HEK293 (cell line): ENCODE measurements at regions of chr20 and their contacts with region 1.

Region 1: DNA sequence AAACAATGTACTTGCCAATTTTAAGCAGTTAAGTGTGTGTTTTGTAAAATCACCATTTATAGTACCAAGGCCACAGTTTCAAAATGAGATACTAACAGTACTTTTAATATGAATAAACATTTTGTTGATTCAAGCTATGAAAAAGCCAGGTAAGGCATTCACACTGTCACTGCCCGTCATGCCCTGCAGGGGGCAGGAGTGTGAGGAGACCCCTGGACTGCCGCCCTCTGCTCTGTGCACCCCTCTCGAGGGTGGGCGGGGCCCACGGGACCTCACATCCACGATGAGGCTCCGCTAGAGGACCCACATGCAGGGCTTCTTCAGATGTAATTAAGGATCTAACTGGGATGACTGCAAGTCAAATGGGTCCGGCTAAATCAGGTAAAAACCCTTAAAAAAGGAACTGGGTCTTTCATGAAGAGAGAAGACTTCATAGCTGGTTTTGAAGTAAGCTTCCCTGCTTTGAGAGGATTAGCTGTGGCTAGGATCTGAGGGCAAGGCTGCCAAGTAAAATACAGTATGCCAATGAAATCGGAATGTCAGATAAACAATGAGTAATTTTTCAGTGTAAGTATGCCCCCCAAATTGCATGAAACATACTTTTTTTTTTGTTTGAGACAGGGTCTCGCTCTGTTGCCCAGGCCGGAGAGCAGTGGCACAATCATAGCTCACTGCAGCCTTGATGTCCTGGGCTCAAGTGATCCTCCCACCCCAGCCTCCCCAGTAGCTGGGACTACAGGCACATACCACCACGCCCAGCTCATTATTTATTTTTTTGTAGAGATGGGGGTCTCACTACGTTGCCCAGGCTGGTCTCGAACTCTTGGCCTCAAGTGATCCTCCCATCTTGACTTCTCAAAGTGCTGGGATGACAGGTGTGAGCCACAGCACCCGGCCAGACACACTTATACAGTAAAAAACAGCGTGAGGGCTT is 18.7 kb downstream of the DIDO1 start:
- H3K4me3 ChIP-seq: no peak overlapping the region
- H3K27ac ChIP-seq: no peak overlapping the region
- H3K4me1 ChIP-seq: no peaks in the 10 kb centered on the region
- CTCF ChIP-seq: peak; percentile 41; the same call in 1 of the 2 replicates

Region 2: DNA sequence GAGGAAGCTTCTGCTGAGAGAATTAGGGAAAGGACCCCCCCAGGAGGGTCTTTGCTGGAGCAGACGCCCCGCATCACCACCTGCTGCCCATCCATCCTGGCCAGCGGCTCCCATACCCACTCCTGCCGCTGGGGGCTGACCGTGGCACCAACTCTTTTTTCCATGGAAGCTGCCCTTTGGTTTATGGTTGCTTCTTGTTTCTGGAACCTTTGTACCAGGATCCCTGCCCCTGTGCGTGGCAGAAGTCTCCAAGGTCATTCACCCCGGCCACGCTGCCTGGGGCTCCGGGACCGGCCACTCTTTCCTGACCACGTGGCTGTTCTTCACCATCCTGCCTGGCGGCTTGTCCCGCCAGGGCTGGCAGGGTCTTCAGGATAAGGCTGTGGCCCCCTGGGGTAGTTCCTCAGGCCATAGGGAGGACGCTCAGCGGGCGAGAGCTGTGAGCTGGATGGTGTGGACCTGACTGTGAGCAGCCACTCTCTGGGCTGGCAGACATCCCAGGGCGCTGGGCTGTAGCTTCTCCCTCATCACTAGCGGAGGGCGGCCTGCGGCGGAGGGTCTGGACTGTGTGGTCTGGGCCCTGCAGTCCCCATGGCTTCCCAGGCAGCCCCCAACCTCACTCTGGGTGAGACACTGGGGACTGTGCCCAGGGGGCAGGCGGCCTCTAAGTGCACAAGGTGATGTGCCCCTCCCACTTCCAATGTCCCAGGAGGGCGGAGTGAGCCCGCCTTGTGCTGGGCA is 457.5 kb before region 1 on chr20:
- CTCF ChIA-PET with region 1: no interaction called
- POLR2A ChIA-PET with region 1: no interaction called
- H3K4me3 ChIP-seq: no peak overlapping the region
- H3K27ac ChIP-seq: no peak overlapping the region
- H3K4me1 ChIP-seq: no peaks in the 10 kb centered on the region
- CTCF ChIP-seq: no peak

Region 3: DNA sequence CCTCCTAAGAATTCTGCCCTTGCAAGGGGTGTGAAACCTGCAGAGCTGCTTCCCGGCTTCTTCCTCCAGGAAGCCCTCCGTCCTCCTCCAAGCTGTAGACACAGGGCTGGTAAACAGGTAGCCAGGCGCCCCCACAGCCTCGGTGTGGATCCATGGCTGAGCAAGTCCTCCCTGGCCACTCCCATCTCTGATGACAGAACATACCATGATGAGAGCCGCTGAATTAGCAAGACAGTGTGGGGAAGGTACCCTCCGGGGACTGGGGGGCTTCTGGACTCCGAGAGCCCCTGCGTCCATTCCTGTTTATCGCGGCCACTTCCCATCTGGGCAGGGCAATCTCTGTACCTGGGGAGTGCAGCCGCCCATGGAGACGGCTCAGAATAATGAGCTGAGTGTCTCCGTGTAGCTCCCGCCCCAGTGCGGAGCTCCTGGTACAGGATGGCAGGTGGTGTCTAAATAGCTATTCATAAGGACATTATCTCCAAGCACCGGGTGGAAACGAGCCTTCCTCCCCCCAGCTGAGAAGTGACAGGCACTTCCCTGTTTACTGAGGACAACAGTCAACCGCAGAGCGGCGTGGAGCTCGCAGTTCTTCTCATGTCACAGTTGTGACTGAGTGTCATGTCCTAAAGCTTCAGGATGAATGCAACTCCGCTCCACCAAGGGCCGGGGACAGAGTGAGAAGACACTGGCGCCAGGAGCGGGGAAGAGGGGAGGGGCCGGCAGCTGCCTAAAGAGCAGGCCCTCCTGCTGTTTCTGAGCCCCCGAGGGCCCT is 221.7 kb before region 1 on chr20:
- CTCF ChIA-PET with region 1: no interaction called
- POLR2A ChIA-PET with region 1: no interaction called
- H3K4me3 ChIP-seq: no peak overlapping the region
- H3K27ac ChIP-seq: no peak overlapping the region
- H3K4me1 ChIP-seq: peaks cover 5% of the 10 kb centered on the region
- CTCF ChIP-seq: no peak

Region 4: GRCh38 chr20:62893700-62894099 is 14.0 kb before region 1 on chr20:
- CTCF ChIA-PET with region 1: interaction called, 15 read pairs
- POLR2A ChIA-PET with region 1: interaction called, 4 read pairs
- H3K4me3 ChIP-seq: no peak overlapping the region
- H3K27ac ChIP-seq: no peak overlapping the region
- H3K4me1 ChIP-seq: no peaks in the 10 kb centered on the region
- CTCF ChIP-seq: no peak

Region 5: GRCh38 chr20:62921119-62921687 is 13.6 kb after region 1 on chr20:
- CTCF ChIA-PET with region 1: interaction called, 33 read pairs
- POLR2A ChIA-PET with region 1: no interaction called
- H3K4me3 ChIP-seq: no peak overlapping the region
- H3K27ac ChIP-seq: no peak overlapping the region
- H3K4me1 ChIP-seq: peaks cover 52% of the 10 kb centered on the region
- CTCF ChIP-seq: peak; percentile 60

Region 6: DNA sequence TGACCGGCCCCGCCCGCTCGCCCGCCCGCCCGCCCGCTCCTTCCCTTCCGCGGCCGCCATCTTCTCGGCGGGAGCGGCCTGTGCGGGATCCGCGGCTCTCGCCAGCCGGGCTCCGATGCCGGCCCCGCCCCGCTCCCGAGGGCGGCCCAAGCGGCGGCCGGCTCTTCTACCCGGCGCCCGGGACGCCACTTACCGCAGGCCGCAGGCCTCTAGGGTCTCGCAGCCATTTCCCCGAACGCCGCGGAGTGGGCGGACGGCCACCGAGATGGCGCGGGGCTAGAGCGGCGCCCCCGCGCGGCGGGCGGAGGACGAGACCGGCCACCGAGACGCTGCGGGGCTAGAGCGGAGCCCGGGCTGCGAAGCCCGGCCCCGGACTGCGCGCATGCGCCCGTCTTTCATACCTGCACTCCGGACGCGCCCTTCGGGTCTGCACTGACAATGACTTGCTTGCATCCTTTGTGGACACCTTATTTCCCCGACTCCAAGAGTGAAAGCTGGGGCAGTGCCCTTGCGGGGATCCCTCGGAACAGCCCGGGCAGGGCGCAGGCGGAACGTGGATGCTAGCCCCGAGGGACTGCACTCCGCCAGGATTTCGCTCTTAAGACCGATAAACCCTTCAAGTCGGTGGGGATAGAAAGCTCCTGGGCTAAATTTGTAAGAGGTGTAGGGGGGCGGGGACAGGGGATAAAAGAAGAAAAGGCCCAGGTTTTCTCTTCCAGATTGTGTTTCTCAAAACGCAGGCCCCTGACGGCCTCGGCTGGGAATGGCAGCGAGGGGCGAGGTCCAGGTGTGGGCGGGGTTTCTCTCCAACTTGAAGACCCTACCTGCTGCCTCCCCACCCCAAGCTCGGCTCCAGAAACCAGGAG is 18.8 kb after region 1 on chr20 and contains the start of gene DIDO1:
- CTCF ChIA-PET with region 1: interaction called, 33 read pairs
- POLR2A ChIA-PET with region 1: interaction called, 3 read pairs
- H3K4me3 ChIP-seq: peak within 1 kb of the TSS; percentile 86
- H3K27ac ChIP-seq: peak within 1 kb of the TSS; percentile 89
- H3K4me1 ChIP-seq: peaks cover 19% of the 10 kb centered on the region
- CTCF ChIP-seq: peak; percentile 69